Activated naive CD4-positive, alpha-beta T cell treated with anti-CD3 and anti-CD28 coated beads for 36 hours (primary cell): ENCODE measurements at regions of chr9 and their contacts with region 1.

Region 1: GRCh38 chr9:124537926-124538325 is 30.7 kb upstream of the NR5A1 start:
- DNase-seq: no peak
- H3K4me3 Mint-ChIP-seq: no peak overlapping the region
- H3K27ac Mint-ChIP-seq: no peak overlapping the region
- H3K4me1 Mint-ChIP-seq: no peaks in the 10 kb centered on the region
- H3K27me3 Mint-ChIP-seq: no peaks in the 10 kb centered on the region

Region 2: DNA sequence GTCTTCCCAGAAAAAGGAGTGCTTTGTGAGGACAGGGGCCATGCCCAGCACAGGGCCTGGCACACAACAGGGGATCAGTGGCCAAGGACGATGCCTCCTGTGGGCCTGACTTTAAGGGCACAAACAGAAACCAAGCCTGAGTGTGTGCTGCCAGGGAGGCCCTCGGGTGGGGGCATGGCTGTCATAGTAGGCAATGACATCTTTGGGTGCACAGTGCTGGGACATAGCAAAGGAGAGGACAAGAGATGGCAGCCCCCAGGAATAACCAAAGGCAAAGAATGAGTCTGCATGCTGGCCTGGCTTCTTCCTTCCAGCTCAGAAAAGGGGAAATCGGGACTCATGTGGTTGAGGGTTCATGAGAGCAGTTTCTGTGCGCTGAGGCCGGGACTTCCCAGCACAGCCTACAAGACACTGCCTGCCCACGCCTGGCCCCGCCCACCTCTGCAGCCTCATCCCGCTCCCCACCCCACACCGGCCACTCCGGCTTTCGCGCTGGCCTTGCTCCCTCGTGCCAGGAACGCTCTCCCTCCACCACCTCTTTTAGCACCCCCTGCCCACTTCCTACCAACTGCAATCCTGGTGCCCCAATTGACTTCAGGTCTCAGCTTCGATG is 540.2 kb before region 1 on chr9:
- CTCF ChIA-PET with region 1: no interaction called
- intact Hi-C with region 1: no loop called
- DNase-seq: peak; percentile 74
- H3K4me3 Mint-ChIP-seq: peak overlapping the region; percentile 29
- H3K27ac Mint-ChIP-seq: peak overlapping the region; percentile 56
- H3K4me1 Mint-ChIP-seq: peaks cover 36% of the 10 kb centered on the region
- H3K27me3 Mint-ChIP-seq: peaks cover 72% of the 10 kb centered on the region

Region 3: GRCh38 chr9:124126571-124127289 is 411.2 kb before region 1 on chr9:
- CTCF ChIA-PET with region 1: interaction called, 3 read pairs
- intact Hi-C with region 1: loop called (anchors 5 kb)
- DNase-seq: peak; percentile 85
- H3K4me3 Mint-ChIP-seq: no peak overlapping the region
- H3K27ac Mint-ChIP-seq: no peak overlapping the region
- H3K4me1 Mint-ChIP-seq: no peaks in the 10 kb centered on the region
- H3K27me3 Mint-ChIP-seq: peaks cover 4% of the 10 kb centered on the region

Region 4: DNA sequence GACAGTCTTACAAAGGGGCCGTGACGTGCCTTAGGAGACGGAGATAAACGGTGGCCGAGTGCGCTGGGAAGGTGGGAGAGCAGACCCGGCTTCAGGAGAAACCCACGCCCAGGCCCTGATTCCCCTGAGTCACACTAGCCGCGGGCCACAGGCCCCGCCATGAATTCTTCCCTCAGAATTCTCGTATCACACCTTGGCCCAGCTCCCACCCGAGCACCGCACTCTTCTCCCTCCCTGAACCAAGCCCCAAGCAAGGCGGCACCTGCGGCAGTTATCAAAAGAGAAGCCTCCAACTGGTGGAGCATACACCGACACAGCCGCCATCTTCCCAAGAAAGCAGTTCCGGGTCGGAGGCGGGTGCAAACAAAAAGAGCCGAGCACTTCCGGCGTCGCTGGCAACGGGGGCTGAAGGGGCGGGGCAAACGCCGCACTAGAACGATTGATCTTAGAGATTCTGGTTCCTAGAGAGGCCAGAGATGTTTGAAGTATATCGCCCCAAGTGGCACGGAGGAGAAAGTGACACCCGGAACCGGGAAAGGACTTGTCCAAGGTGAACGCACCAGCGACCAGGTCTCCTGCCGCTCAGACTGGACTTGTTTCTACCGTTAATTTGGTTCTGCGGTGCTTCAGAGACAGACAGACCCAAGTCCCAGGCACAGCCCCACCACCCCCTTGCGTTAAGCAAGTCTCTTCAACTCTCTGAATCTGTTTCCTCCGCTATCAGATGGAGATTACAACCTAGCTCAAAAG is 122.6 kb before region 1 on chr9 and contains the start of gene PSMB7:
- CTCF ChIA-PET with region 1: interaction called, 52 read pairs
- intact Hi-C with region 1: loop called (anchors 1 kb)
- DNase-seq: peak; percentile 99
- H3K4me3 Mint-ChIP-seq: peak within 1 kb of the TSS; percentile 95
- H3K27ac Mint-ChIP-seq: peak within 1 kb of the TSS; percentile 83
- H3K4me1 Mint-ChIP-seq: peaks cover 38% of the 10 kb centered on the region
- H3K27me3 Mint-ChIP-seq: no peaks in the 10 kb centered on the region
- total RNA-seq, gene PSMB7: 161 to 167 TPM

Region 5: GRCh38 chr9:124420991-124421543 is 116.9 kb before region 1 on chr9:
- CTCF ChIA-PET with region 1: interaction called, 52 read pairs
- intact Hi-C with region 1: loop called (anchors 1 kb)
- DNase-seq: no peak
- H3K4me3 Mint-ChIP-seq: no peak overlapping the region
- H3K27ac Mint-ChIP-seq: no peak overlapping the region
- H3K4me1 Mint-ChIP-seq: no peaks in the 10 kb centered on the region
- H3K27me3 Mint-ChIP-seq: no peaks in the 10 kb centered on the region

Region 6: DNA sequence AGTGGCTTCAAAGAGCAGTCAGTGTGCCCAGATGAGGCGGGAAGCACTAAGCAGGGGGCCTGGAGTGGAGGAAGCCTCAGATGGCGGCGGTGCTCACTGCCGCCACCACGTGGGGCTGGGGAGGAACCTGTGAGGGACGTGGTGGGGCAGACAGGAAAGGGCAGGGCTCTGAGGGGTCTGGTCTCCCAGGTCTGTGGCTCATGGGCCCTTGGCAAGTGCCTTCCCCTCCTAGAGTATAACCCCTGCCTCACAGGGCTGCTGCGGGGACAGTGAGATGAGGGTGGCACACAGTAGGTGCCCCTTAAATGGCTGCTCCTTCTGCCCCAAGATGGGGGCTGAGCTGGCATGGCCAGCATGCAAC is 57.3 kb before region 1 on chr9:
- CTCF ChIA-PET with region 1: no interaction called
- intact Hi-C with region 1: no loop called
- DNase-seq: no peak
- H3K4me3 Mint-ChIP-seq: no peak overlapping the region
- H3K27ac Mint-ChIP-seq: no peak overlapping the region
- H3K4me1 Mint-ChIP-seq: no peaks in the 10 kb centered on the region
- H3K27me3 Mint-ChIP-seq: peaks cover 18% of the 10 kb centered on the region

Region 7: GRCh38 chr9:124527781-124528180 is 10.1 kb before region 1 on chr9:
- CTCF ChIA-PET with region 1: interaction called, 11 read pairs
- intact Hi-C with region 1: no loop called
- DNase-seq: no peak
- H3K4me3 Mint-ChIP-seq: no peak overlapping the region
- H3K27ac Mint-ChIP-seq: no peak overlapping the region
- H3K4me1 Mint-ChIP-seq: no peaks in the 10 kb centered on the region
- H3K27me3 Mint-ChIP-seq: no peaks in the 10 kb centered on the region

Region 8: DNA sequence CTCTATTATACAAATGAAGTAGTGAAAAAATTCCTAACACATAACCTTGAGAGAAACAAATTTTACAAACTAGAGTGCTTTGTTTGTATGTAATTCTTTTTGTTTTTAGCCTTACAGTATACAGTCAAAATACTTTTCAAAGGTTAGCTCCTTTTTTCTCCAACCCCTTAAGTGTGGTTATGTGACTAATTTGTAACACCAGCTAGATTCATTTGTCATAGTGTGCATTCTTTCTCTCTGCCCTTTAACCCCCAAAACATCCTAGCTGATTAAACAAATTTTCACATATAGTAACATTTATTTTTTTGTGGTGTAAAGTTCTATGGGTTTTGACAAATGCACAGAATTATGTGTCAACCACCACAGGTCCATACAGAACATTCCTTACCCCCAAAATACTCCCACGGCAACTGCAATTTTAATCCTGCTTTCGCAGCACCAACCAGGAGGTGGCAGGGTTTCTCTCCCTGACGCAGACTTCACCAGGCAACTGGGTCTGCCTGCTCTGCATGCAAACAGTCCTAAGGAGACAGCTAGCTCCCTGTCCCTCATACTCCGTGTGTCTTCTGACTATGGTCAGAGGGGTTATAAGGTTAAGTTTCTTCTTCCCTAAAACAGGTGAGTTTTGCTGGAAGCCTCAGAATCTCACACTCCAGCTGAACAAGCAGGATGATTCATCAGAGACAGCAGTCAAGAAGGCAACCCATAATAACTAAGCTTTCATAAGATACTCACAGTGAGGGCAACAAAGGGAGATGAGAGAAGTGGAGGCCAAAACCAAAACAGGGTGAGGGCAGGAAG is 13.7 kb after region 1 on chr9:
- CTCF ChIA-PET with region 1: interaction called, 31 read pairs
- intact Hi-C with region 1: no loop called
- DNase-seq: peak; percentile 62
- H3K4me3 Mint-ChIP-seq: no peak overlapping the region
- H3K27ac Mint-ChIP-seq: no peak overlapping the region
- H3K4me1 Mint-ChIP-seq: peaks cover 18% of the 10 kb centered on the region
- H3K27me3 Mint-ChIP-seq: no peaks in the 10 kb centered on the region